ENCODE measurements at regions of chr17 and their contacts with region 1.

Region 1: DNA sequence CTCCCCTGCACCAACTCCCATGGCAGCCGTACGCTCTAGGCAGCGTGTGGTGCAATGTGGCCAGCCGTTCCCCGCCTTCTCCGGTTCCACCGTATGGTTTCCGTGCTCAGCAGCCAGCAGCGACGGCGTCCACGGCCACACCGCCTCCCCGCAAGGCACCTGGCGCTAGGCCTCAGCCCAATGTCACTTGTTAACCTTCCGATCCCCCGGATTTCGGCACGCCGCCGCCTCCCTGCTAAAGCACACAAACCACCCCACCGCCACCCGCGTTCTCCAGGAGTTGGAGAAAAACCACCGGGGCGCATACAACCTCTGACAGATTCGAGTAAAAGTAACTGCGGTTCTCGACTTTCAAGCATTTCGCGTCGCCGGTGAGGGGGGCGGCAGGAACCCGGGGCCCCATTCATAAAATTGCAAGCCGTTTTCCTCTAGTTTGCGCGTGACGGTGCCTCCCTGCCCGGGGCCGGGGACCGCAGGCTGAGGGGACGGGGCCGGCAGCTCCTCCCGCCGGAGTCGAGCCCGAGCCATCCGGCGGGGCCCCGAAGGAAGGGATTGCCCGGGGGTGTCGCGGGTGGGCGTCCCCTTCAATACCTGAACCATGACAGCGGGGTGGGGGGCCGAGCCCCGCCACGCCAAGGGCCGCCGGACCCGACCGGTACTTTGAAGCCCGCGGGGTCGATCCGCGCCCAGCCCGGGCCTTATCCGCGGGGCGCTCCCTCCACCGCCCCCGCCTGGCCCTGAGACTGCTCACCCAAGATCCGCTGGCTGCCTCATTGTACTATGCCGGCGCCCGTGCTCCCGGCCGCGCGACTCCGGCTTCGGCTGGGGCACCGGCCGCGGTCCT is at the start of gene TEX2:
- DNase-seq: peak; percentile 38
- H3K4me3 Mint-ChIP-seq: peak within 1 kb of the TSS; percentile 84
- H3K27ac Mint-ChIP-seq: peak within 1 kb of the TSS; percentile 36
- H3K4me1 Mint-ChIP-seq: peaks cover 24% of the 10 kb centered on the region
- H3K27me3 Mint-ChIP-seq: no peaks in the 10 kb centered on the region
- CTCF ChIP-seq: no peak
- total RNA-seq, gene TEX2: 33.7 and 42.2 TPM in 2 replicates

Region 2: DNA sequence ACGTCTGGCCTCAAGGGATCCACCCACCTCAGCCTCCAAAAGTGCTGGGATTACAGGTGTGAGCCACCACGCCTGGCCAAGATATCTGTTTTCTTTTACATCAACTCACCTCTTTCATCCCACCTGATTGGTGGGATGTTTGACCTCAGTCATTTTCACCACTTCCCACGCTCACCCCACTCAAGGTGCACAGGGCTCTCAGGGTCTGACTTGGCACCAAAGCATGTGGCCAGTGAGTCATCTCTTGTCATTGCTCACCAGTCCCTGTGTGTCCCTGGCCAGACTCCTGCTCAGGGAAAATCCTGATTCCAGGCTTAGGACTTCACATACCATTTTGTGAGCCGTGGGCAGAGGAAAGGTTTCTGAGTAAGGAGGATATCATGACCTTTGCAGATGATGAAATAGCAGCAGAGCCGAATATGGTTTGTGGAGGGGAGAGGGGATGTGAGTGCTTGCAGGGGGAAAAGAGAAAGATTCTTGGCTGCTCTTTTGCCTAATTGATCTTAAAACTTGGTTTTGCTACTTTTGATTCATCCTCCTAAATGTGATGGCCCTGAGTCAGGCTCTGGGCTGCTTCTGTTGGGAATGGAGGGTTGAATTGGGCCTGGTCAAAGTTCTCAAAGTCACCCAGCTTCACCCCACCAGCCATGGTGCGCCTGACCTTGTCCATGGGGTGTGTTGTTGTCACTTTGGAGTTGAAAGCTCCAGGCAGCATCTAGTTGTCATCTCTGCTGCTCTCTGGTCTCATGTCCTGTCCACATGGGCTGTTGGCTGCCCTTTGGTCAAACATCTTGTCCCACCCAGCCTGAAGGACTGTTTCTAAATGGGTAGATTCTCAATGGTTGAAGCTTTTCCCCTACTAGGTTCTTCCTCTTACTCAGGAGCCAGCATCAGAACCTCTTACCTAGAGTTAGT is 745.5 kb before region 1 on chr17:
- CTCF ChIA-PET with region 1: no interaction called
- POLR2A ChIA-PET with region 1: no interaction called
- intact Hi-C with region 1: no loop called
- DNase-seq: peak; percentile 61
- H3K4me3 Mint-ChIP-seq: no peak overlapping the region
- H3K27ac Mint-ChIP-seq: no peak overlapping the region
- H3K4me1 Mint-ChIP-seq: no peaks in the 10 kb centered on the region
- H3K27me3 Mint-ChIP-seq: peaks cover 37% of the 10 kb centered on the region
- CTCF ChIP-seq: no peak

Region 3: GRCh38 chr17:64196626-64197025 is 66.0 kb before region 1 on chr17:
- CTCF ChIA-PET with region 1: interaction called, 4 read pairs
- POLR2A ChIA-PET with region 1: interaction called, 8 read pairs
- intact Hi-C with region 1: loop called (anchors 5 kb)
- DNase-seq: peak; percentile 65
- H3K4me3 Mint-ChIP-seq: no peak overlapping the region
- H3K27ac Mint-ChIP-seq: no peak overlapping the region
- H3K4me1 Mint-ChIP-seq: peaks cover 30% of the 10 kb centered on the region
- H3K27me3 Mint-ChIP-seq: no peaks in the 10 kb centered on the region
- CTCF ChIP-seq: no peak

Region 4: GRCh38 chr17:64209983-64210382 is 52.7 kb before region 1 on chr17:
- CTCF ChIA-PET with region 1: no interaction called
- POLR2A ChIA-PET with region 1: interaction called, 17 read pairs
- intact Hi-C with region 1: loop called (anchors 5 kb)
- DNase-seq: peak; percentile 30
- H3K4me3 Mint-ChIP-seq: peak overlapping the region; percentile 35
- H3K27ac Mint-ChIP-seq: peak overlapping the region; percentile 21
- H3K4me1 Mint-ChIP-seq: peaks cover 28% of the 10 kb centered on the region
- H3K27me3 Mint-ChIP-seq: no peaks in the 10 kb centered on the region
- CTCF ChIP-seq: no peak

Region 5: DNA sequence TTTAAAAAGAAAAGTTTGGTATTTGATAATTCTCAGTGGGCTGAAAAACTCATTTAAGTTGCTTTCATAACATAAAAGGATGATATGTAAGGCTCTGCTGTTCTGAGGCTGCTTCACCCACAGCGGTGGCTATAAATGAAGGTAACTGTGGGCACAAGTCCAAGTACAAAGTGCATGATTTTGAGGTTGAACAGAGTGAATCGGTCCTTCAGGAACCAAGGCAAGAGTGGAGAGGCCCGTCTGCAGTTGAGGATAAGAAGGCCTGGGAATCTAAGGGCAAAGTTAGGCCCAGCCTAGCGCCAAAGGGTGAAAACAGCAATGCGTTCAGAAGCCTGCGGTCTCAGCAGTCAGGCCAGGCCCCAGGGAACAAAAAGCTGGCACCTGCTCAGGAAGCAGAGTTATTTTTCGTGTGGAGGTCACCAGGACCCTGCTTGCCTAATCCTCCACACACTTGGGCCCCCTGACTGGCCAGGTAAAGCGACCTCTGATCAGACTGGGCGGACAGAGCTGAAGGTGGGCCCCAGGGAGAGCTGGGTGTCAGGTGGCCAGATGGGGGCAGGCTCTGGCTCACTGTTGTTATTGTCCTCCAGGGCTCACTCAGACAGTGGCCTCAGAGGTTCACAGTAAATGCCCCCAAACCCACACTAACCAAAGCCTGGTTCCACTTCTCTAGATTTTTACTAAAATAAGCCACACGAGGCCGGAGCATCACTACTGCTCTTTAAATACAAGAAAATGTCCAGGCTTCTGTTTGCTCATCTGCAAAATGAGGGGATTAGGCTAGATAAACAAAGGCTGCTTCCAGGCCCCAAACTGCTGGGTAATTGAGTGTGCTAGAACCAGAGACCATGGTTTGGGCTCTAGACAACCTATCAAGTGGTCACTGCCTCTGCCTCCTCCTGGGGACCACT is 46.0 kb before region 1 on chr17:
- CTCF ChIA-PET with region 1: interaction called, 5 read pairs
- POLR2A ChIA-PET with region 1: interaction called, 10 read pairs
- intact Hi-C with region 1: loop called (anchors 5 kb)
- DNase-seq: peak; percentile 43
- H3K4me3 Mint-ChIP-seq: no peak overlapping the region
- H3K27ac Mint-ChIP-seq: peak overlapping the region; percentile 89
- H3K4me1 Mint-ChIP-seq: peaks cover 38% of the 10 kb centered on the region
- H3K27me3 Mint-ChIP-seq: no peaks in the 10 kb centered on the region
- CTCF ChIP-seq: no peak

Region 6: GRCh38 chr17:64230795-64231408 is 31.7 kb before region 1 on chr17:
- CTCF ChIA-PET with region 1: interaction called, 3 read pairs
- POLR2A ChIA-PET with region 1: interaction called, 54 read pairs
- intact Hi-C with region 1: no loop called
- DNase-seq: peak; percentile 90
- H3K4me3 Mint-ChIP-seq: peak overlapping the region; percentile 29
- H3K27ac Mint-ChIP-seq: peak overlapping the region; percentile 91
- H3K4me1 Mint-ChIP-seq: peaks cover 32% of the 10 kb centered on the region
- H3K27me3 Mint-ChIP-seq: no peaks in the 10 kb centered on the region
- CTCF ChIP-seq: no peak

Region 7: GRCh38 chr17:64240741-64241347 is 21.8 kb before region 1 on chr17:
- CTCF ChIA-PET with region 1: interaction called, 3 read pairs
- POLR2A ChIA-PET with region 1: interaction called, 23 read pairs
- intact Hi-C with region 1: no loop called
- DNase-seq: peak; percentile 64
- H3K4me3 Mint-ChIP-seq: no peak overlapping the region
- H3K27ac Mint-ChIP-seq: peak overlapping the region; percentile 76
- H3K4me1 Mint-ChIP-seq: peaks cover 52% of the 10 kb centered on the region
- H3K27me3 Mint-ChIP-seq: no peaks in the 10 kb centered on the region
- CTCF ChIP-seq: no peak

Region 8: GRCh38 chr17:64281962-64282727 is 19.5 kb after region 1 on chr17:
- CTCF ChIA-PET with region 1: interaction called, 17 read pairs
- POLR2A ChIA-PET with region 1: interaction called, 6 read pairs
- intact Hi-C with region 1: no loop called
- DNase-seq: peak; percentile 72
- H3K4me3 Mint-ChIP-seq: no peak overlapping the region
- H3K27ac Mint-ChIP-seq: no peak overlapping the region
- H3K4me1 Mint-ChIP-seq: peaks cover 9% of the 10 kb centered on the region
- H3K27me3 Mint-ChIP-seq: no peaks in the 10 kb centered on the region
- CTCF ChIP-seq: peak; percentile 74

Measured in MCF 10A (cell line).